Calu3 (cell line): ENCODE measurements at regions of chrX and their contacts with region 1.

Region 1: GRCh38 chrX:51420610-51421009 is 75.8 kb downstream of the NUDT11 start:
- DNase-seq: peak; percentile 25
- H3K4me3 Mint-ChIP-seq: no peak overlapping the region
- H3K27ac Mint-ChIP-seq: no peak overlapping the region
- H3K4me1 Mint-ChIP-seq: no peaks in the 10 kb centered on the region
- H3K27me3 Mint-ChIP-seq: peaks cover 19% of the 10 kb centered on the region
- CTCF ChIP-seq: no peak

Region 2: DNA sequence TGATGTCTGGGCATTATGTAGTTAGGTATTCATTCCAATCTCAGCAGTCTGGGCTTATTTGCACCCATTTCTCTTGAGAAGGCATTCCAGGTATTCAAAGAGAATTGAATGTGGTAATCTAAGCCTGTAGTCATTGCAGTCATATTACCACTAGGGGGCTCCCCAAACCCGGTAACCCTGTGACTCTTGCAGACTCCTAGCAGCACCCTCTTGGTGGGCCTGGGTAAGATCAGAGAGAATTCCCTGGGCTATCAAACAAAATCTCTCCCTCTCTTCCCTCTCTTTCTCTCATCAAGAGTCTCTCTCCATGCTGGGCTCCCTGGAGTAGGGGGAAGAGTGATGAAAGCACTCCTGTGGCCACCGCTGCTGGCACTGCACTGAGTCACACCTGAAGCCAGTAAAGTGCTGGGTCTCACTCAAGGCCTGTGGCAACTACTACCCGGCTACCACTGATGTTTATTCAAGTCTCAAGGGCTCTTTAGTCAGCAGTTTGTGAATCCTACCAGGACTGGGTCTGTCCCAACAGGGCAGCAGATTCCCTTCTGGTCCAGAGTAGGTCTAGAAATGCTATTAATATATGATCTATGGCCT is 275.7 kb before region 1 on chrX:
- CTCF ChIA-PET with region 1: no interaction called
- intact Hi-C with region 1: loop called (anchors 10 kb)
- DNase-seq: peak; percentile 44
- H3K4me3 Mint-ChIP-seq: no peak overlapping the region
- H3K27ac Mint-ChIP-seq: no peak overlapping the region
- H3K4me1 Mint-ChIP-seq: no peaks in the 10 kb centered on the region
- H3K27me3 Mint-ChIP-seq: peaks cover 32% of the 10 kb centered on the region
- CTCF ChIP-seq: peak; percentile 18

Region 3: DNA sequence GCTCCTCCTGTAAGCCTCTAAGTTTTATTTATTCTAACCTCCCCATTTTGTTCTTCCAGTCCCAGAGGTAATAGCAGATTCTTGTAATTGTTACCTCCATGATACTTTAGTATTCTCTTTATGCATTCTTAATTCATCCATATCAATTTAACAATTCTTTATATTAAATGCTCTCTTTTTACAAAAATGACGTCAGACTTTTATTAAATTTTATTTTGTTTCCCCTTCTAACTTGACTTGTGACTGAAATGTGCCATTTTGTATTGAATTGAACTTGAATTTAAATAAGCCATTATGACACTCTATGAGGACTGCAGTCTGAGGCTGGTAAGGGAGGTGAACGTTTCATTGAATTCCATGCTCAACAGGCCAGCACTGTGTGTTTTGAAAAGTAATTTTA is 148.0 kb before region 1 on chrX:
- CTCF ChIA-PET with region 1: no interaction called
- intact Hi-C with region 1: no loop called
- DNase-seq: no peak
- H3K4me3 Mint-ChIP-seq: no peak overlapping the region
- H3K27ac Mint-ChIP-seq: no peak overlapping the region
- H3K4me1 Mint-ChIP-seq: no peaks in the 10 kb centered on the region
- H3K27me3 Mint-ChIP-seq: no peaks in the 10 kb centered on the region
- CTCF ChIP-seq: no peak

Region 4: GRCh38 chrX:51336584-51336983 is 84.0 kb before region 1 on chrX:
- CTCF ChIA-PET with region 1: interaction called, 5 read pairs
- intact Hi-C with region 1: loop called (anchors 2 kb)
- DNase-seq: peak; percentile 3
- H3K4me3 Mint-ChIP-seq: no peak overlapping the region
- H3K27ac Mint-ChIP-seq: no peak overlapping the region
- H3K4me1 Mint-ChIP-seq: no peaks in the 10 kb centered on the region
- H3K27me3 Mint-ChIP-seq: no peaks in the 10 kb centered on the region
- CTCF ChIP-seq: no peak

Region 5: DNA sequence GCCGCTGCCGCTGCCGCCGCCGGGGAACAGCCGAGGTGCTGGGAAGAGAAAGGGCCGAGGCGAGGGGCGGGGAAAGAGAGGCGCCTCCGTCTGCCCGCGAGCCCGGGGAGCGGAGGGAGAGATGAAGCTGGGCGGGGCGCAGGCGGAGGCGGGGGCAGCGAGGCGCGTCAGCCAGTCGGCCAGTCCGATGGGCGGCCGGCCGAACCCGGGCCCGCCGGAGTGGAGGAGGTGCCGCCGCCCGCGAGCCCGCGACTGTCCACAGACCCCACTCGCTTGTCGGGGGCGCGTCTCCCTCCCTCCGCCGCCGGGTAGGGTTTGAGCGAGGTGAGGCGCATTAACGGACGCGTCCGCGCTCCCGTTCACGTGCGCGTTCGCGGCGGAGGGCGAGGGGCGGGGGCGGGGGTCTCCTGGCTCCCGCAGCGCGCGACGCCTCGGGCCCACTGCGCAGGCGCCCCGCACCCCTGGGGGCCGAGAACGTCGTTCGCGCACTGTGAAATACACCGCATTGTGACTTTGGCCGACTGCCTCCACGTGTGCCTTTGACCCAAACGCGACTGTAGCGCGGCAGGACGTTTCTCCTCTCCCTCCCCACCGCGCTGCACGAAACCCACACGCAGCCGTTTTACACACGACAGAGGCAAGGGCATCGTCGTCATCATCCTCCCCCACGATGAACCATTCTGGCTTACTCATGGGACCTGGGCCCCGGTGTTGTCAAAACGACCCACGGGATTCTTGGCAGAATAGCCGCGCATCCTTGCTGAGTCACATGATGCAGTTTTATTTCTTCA is 76.1 kb after region 1 on chrX and contains the start of gene NUDT11:
- CTCF ChIA-PET with region 1: no interaction called
- intact Hi-C with region 1: no loop called
- DNase-seq: peak; percentile 63
- H3K4me3 Mint-ChIP-seq: peak within 1 kb of the TSS; percentile 71
- H3K27ac Mint-ChIP-seq: no peak within 1 kb of the TSS
- H3K4me1 Mint-ChIP-seq: no peaks in the 10 kb centered on the region
- H3K27me3 Mint-ChIP-seq: no peaks in the 10 kb centered on the region
- CTCF ChIP-seq: no peak
- total RNA-seq, gene NUDT11: 1.3 and 1.4 TPM in 2 replicates

Region 6: GRCh38 chrX:51665981-51666380 is 245.4 kb after region 1 on chrX:
- CTCF ChIA-PET with region 1: no interaction called
- intact Hi-C with region 1: no loop called
- DNase-seq: no peak
- H3K4me3 Mint-ChIP-seq: no peak overlapping the region
- H3K27ac Mint-ChIP-seq: no peak overlapping the region
- H3K4me1 Mint-ChIP-seq: no peaks in the 10 kb centered on the region
- H3K27me3 Mint-ChIP-seq: no peaks in the 10 kb centered on the region
- CTCF ChIP-seq: no peak